Activated CD4-positive, alpha-beta memory T cell treated with anti-CD3 and anti-CD28 coated beads for 36 hours (primary cell): ENCODE measurements at regions of chr17 and their contacts with region 1.

Region 1: DNA sequence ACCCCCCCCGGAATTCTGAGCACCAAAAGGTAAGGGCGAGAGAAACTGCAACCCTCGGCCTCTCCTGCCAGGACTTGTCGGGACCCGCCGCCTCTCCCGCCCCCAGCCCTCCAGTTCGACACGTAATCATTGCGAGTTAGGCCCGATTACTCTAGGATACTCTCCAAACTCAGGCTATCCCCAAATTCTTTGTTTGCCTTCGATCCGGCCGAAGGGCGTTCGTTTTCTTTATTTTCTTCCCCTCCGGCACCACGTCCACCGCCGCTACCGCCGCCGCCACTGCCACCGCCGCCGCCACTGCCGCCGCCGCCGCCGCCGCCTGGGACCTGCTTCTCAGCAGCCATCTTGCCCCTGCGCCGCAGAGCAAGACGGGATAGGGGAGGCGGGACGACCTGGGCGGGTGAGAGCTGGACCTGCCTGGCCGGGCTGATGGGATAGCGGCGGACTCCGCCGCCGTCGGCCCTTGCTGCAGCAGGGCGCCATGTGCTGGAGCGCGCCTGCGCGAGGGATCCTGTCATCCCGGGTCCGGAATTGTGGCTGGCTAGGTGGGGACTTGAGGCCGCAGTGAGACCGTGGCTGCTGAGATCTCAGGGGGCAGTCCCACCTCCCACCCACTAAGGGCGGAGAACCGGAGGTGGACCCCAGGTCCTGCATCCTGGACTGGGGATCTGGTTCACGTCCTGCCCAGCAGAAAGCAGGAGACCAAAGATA is at the start of gene SRP68:
- DNase-seq: peak; percentile 90
- H3K4me3 Mint-ChIP-seq: peak within 1 kb of the TSS; percentile 99
- H3K27ac Mint-ChIP-seq: peak within 1 kb of the TSS; percentile 100
- H3K4me1 Mint-ChIP-seq: peaks cover 45% of the 10 kb centered on the region
- H3K27me3 Mint-ChIP-seq: peaks cover 27% of the 10 kb centered on the region
- total RNA-seq, gene SRP68: 142 to 148 TPM

Region 2: DNA sequence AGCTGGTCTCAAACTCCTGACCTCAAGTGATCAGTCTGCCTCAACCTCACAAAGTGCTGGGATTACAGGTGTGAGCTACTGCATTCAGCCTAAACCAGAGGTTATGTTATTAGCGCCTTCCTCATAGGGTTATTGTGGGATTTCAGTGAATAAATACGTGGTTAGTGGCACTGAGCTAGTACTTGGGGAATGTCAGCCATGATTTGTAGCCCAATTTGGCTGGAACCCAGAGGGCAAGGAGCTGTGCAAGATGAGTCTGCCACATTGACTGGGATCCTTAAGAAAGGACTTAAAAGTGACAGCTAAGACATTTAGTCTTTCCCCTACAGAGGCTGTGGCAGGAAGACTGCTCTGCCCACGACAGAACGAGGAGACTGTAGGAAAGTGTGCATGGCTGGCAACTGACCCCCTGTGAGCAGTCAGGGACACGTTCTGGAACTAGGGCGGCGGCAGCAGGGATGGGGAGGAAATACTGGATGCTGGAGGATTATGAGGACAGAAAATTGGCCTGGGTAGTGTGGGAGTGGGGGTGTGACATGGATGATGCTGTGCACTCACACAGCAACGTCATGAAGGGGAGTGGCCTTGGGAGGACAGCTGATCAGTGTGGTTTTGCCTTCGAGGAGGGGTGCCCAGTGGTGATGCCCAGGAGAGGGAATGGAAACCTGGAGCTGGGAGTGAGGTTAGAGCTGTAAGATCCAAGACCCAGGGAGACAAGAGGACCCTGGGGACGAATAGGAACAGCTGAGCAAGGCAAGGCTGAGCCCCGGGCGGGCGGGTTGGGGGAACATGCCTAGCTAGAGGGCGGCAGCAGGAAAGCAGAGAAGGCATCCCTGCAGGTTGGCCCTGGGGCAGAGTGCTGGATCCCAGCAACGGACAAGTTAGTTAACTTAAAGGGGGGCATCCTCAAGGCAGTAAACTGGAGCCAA is 1040.1 kb before region 1 on chr17:
- CTCF ChIA-PET with region 1: no interaction called
- POLR2A ChIA-PET with region 1: no interaction called
- intact Hi-C with region 1: no loop called
- DNase-seq: peak; percentile 77
- H3K4me3 Mint-ChIP-seq: peak overlapping the region; percentile 69
- H3K27ac Mint-ChIP-seq: no peak overlapping the region
- H3K4me1 Mint-ChIP-seq: peaks cover 46% of the 10 kb centered on the region
- H3K27me3 Mint-ChIP-seq: peaks cover 4% of the 10 kb centered on the region

Region 3: GRCh38 chr17:75896415-75897159 is 175.7 kb before region 1 on chr17 and contains the start of gene TRIM65:
- CTCF ChIA-PET with region 1: no interaction called
- POLR2A ChIA-PET with region 1: no interaction called
- intact Hi-C with region 1: loop called (anchors 5 kb)
- DNase-seq: peak; percentile 87
- H3K4me3 Mint-ChIP-seq: peak within 1 kb of the TSS; percentile 84
- H3K27ac Mint-ChIP-seq: peak within 1 kb of the TSS; percentile 72
- H3K4me1 Mint-ChIP-seq: peaks cover 24% of the 10 kb centered on the region
- H3K27me3 Mint-ChIP-seq: no peaks in the 10 kb centered on the region
- total RNA-seq, gene TRIM65: 27.5 to 28.2 TPM

Region 4: DNA sequence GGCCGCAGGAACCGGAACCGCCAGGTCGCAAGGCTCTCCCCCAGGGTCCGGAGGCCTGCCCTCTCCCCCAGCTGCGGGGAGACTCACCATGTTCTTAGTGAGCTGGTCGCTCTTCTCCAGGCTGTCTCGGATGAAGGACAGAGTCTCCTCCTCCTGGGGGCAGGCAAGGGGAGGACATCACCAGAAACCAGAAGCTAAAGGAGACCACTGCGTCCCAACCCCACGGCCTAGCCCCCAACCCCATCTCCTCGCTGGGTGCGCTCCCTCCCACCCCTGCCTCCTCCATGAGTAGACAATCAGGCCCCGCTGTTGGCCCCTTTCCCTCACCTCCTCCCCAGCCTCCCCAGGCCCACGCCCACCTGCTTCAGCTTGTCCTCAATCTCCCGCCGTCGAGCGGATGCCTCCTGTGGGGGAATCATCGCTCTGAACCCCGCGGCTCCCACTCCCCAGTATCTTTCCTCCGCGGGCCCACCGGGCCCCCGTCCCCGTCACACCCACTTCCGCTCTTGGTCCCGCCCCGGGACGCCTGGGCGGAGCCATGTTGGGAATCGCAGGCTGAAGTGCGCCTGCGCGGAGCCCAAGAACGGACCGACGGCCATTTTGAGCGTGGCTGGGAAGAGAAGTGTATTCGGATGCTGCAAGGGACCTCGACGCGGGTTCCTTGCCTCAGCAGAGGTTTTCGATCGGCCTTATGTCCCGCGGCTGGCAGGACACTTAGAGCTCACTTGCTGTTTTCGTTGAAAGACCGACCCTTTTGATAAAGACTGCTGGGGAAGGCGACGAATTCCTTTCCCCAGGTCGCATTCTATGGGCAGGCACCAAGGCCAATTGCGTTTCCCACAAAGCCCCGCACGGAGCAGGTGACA is 31.2 kb after region 1 on chr17 and contains the start of gene EXOC7:
- CTCF ChIA-PET with region 1: interaction called, 5 read pairs
- POLR2A ChIA-PET with region 1: interaction called, 8 read pairs
- intact Hi-C with region 1: loop called (anchors 2 kb)
- DNase-seq: peak; percentile 95
- H3K4me3 Mint-ChIP-seq: peak within 1 kb of the TSS; percentile 98
- H3K27ac Mint-ChIP-seq: peak within 1 kb of the TSS; percentile 92
- H3K4me1 Mint-ChIP-seq: peaks cover 24% of the 10 kb centered on the region
- H3K27me3 Mint-ChIP-seq: no peaks in the 10 kb centered on the region
- total RNA-seq, gene EXOC7: 63.3 to 66.0 TPM

Region 5: GRCh38 chr17:76191896-76192295 is 119.6 kb after region 1 on chr17:
- CTCF ChIA-PET with region 1: no interaction called
- POLR2A ChIA-PET with region 1: interaction called, 16 read pairs
- intact Hi-C with region 1: loop called (anchors 5 kb)
- DNase-seq: peak; percentile 55
- H3K4me3 Mint-ChIP-seq: peak overlapping the region; percentile 61
- H3K27ac Mint-ChIP-seq: peak overlapping the region; percentile 97
- H3K4me1 Mint-ChIP-seq: peaks cover 59% of the 10 kb centered on the region
- H3K27me3 Mint-ChIP-seq: no peaks in the 10 kb centered on the region

Region 6: GRCh38 chr17:76281573-76282371 is 209.5 kb after region 1 on chr17:
- CTCF ChIA-PET with region 1: no interaction called
- POLR2A ChIA-PET with region 1: no interaction called
- intact Hi-C with region 1: no loop called
- DNase-seq: no peak
- H3K4me3 Mint-ChIP-seq: no peak overlapping the region
- H3K27ac Mint-ChIP-seq: no peak overlapping the region
- H3K4me1 Mint-ChIP-seq: peaks cover 4% of the 10 kb centered on the region
- H3K27me3 Mint-ChIP-seq: no peaks in the 10 kb centered on the region